Left colon (tissue), 2 donors: ENCODE measurements at regions of chr4 and their contacts with region 1.

Region 1: DNA sequence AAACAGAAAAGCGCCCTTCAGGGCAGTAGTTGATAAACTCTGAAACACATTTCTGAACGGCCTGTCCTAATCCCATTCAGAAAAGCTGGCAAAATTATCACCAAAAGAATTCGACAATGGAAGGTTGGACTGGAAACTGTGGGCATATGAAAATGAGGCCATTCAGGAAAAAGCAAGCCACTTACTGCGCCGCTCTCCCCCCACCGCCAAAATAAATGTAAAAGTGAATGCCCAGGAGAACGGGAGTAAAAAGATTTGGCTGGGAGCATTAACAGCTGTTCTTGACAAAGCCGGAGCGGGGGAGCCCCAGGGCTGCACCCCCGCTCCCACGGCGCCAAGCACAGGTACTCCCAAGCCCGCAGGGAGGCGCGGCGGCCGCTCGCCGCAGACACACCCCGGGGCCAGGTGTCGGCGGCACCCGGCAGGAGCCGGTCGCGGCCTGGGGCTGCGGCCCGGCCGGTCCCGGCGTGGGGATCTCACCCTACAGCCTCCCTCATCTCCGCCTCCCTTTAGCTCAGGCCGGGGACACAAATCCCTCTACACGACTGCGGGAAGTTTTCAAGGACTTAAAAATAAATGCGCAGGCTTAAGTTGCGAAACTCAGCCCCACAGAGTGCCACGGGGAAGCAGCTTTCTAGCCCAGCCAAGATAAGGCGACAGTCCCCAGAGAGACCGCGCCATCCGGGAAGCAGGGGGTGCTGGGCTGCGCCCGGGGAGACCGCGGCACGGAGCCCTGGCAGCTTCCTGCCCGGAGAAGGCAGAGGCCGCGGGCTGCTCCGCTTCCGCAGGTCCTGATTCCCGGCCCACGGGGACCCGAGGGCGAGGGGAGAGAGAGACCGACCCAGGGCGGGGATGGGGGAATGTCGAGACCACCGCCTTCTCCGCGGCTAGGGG is 593 bp downstream of the SH3RF1 start:
- DNase-seq: peak; percentile 48 to 70
- ATAC-seq: peak; percentile 73

Region 2: DNA sequence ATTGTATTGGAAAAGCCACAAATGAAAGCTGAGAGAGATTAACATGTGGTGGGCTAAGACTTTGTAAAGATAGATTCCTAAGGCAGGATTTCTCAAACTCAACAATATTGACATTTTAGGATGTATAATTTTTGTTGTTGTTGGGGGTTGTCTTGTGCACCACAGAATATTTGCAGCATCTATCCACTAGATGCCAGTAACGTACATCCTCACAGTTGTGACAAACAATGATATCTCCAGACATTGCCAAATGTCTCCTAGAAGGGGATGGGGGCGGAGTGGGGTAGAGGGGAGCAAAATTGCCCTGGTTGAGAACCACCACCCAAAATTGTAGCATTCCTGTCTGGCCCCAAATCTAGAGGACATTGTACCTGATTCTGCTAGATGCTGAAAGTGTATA is 245.4 kb before region 1 on chr4:
- intact Hi-C with region 1: loop called in 1 of 2 experiments (anchors 10 kb)
- DNase-seq: no peak
- ATAC-seq: peak; percentile 87